ENCODE measurements at regions of chr18 and their contacts with region 1.

Region 1: DNA sequence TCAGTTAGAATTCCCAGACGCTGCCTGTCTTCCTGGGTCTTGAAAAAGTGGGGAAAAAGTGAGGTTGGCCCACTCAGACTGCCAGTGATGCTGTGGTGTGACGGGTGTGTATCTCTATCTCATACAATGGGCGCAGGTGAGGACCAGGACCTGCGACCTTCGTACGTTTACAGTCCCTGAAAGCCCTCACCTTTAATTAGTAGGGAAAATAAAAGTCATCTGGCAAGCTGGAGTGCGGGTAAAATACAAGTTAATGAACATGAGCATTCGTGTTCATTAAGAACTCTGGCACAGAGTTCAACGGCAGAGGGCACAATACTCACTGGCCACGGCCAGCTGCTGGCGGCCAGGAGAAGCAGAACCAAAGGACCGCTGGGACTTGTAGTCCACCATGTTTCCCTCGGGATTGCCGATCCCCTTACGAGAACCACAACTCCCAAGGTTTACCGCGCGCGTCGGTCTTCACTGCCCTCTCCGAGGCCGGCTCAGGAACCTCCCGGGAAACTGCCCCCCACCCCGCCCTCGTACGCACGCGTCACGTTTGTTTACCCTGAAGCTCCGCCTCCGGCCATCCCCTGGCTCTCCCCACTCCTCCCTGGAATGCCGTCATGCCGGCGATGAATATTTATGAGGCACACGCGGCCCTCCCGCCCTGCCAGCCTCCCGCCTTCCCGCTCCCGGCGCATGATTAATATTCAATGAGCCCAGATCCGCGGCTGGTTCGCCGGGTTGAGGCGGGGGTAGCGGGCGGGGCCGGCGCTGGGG is 488 bp upstream of the PHLPP1 start:
- DNase-seq: peak; percentile 98
- ATAC-seq: peak; percentile 81
- H3K4me3 ChIP-seq: peak overlapping the region; percentile 73
- H3K27ac ChIP-seq: peak overlapping the region; percentile 43
- H3K4me1 ChIP-seq: peaks cover 34% of the 10 kb centered on the region
- H3K27me3 ChIP-seq: no peaks in the 10 kb centered on the region
- CTCF ChIP-seq: peak; percentile 87

Region 2: DNA sequence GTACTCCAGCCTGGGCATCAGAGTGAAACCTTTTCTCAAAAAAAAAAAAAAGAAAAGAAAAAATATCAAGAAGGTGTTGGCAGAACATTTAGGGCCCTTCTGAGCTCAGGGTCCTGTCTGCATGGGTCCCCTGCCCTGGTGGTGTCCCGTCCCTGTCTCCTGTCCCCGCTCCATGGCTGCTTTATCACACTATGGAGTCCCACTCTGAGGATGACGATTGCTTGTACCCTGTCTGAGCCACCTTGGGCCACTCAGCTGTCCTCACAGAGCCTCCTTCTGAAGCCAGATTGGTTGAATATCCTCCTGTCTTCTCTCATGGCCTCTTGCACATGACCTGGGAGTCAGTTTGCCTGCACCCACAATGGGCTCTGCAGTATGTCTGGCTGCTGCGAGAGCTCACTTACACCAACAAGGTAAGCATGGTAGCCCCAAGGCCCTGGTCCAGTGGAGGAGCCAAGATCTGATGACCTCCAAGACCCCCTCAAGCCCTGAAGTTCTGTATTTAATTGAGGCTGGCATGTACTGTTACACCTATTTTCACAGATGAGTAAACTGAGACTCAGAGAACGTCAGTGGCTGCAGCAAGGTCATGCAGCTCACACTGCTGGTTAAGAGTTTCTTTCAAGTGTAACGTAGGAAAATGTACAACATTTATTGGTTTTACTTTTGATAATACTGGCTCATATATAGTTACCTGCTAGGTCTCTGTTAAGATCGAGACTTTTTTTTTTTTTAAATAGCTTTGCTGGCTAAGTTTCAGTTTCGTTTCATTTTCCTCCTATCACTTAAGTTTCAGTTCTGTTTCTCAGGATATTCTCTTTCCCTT is 209.0 kb before region 1 on chr18:
- CTCF ChIA-PET with region 1: no interaction called
- POLR2A ChIA-PET with region 1: no interaction called
- intact Hi-C with region 1: no loop called
- DNase-seq: peak; percentile 27
- ATAC-seq: peak; percentile 54
- H3K4me3 ChIP-seq: peak overlapping the region; percentile 82
- H3K27ac ChIP-seq: no peak overlapping the region
- H3K4me1 ChIP-seq: peaks cover 4% of the 10 kb centered on the region; the same call in 1 of the 2 replicates
- H3K27me3 ChIP-seq: no peaks in the 10 kb centered on the region
- CTCF ChIP-seq: no peak

Region 3: DNA sequence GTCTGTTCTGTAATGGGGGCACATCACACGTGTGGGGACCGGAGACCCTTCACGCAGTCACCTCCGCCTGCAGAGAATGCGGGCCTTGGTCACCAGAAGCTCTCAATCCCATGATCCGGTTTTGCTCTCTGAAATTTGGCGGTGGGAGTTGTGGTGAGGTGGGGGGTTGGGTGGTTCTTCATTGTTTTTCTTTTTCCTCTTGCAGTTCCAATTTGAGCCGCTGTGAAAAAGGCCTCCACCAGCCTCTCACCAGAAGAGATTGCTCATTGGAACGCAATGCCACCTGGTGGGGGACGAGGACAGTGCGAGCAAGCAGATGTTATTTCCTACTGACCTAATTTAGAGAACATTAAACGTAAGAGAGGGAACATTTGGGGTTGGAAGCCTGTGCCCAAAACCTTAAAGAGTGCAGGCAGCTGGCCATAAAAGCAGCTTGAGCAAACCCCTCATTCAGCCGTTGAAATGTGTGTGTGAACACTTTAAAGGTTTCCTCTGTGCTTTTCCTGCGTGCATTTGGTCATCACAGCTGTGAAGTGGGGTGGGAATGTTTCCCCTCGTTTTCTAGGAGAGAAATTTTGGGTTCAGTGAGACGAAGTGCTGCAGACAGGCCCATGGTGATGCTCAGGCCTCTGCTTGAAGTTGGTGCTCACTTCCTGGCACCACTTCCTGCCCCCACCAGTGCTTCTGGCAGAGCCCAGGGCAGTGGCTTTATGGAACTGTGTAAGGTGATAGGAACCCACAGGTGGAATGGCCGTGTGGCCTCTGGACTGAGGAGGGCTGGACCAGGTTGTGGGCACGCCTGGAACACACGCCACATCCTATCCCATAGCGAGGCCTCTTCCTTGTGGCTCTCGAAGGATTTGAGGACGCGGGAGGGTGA is 130.4 kb before region 1 on chr18:
- CTCF ChIA-PET with region 1: interaction called, 3 read pairs
- POLR2A ChIA-PET with region 1: no interaction called
- intact Hi-C with region 1: loop called (anchors 1 kb)
- DNase-seq: peak; percentile 90
- ATAC-seq: peak; percentile 83
- H3K4me3 ChIP-seq: no peak overlapping the region
- H3K27ac ChIP-seq: no peak overlapping the region
- H3K4me1 ChIP-seq: peaks cover 4% of the 10 kb centered on the region
- H3K27me3 ChIP-seq: no peaks in the 10 kb centered on the region
- CTCF ChIP-seq: peak; percentile 97

Region 4: GRCh38 chr18:62738639-62739038 is 23.8 kb after region 1 on chr18:
- CTCF ChIA-PET with region 1: no interaction called
- POLR2A ChIA-PET with region 1: no interaction called
- intact Hi-C with region 1: no loop called
- DNase-seq: no peak
- ATAC-seq: no peak
- H3K4me3 ChIP-seq: no peak overlapping the region
- H3K27ac ChIP-seq: no peak overlapping the region
- H3K4me1 ChIP-seq: peaks cover 6% of the 10 kb centered on the region; the same call in 1 of the 2 replicates
- H3K27me3 ChIP-seq: no peaks in the 10 kb centered on the region
- CTCF ChIP-seq: no peak

Region 5: GRCh38 chr18:62757399-62758010 is 42.7 kb after region 1 on chr18:
- CTCF ChIA-PET with region 1: interaction called, 8 read pairs
- POLR2A ChIA-PET with region 1: interaction called, 10 read pairs
- intact Hi-C with region 1: loop called (anchors 1 kb)
- DNase-seq: peak; percentile 93
- ATAC-seq: peak; percentile 65
- H3K4me3 ChIP-seq: peak overlapping the region; percentile 47
- H3K27ac ChIP-seq: peak overlapping the region; percentile 89
- H3K4me1 ChIP-seq: peaks cover 50% of the 10 kb centered on the region
- H3K27me3 ChIP-seq: no peaks in the 10 kb centered on the region
- CTCF ChIP-seq: no peak

Region 6: GRCh38 chr18:62925031-62925688 is 210.3 kb after region 1 on chr18:
- CTCF ChIA-PET with region 1: interaction called, 5 read pairs
- POLR2A ChIA-PET with region 1: no interaction called
- intact Hi-C with region 1: loop called (anchors 1 kb)
- DNase-seq: peak; percentile 88
- ATAC-seq: peak; percentile 95
- H3K4me3 ChIP-seq: peak overlapping the region; percentile 41; the same call in 1 of the 2 replicates
- H3K27ac ChIP-seq: peak overlapping the region; percentile 84
- H3K4me1 ChIP-seq: peaks cover 34% of the 10 kb centered on the region
- H3K27me3 ChIP-seq: no peaks in the 10 kb centered on the region
- CTCF ChIP-seq: no peak

Region 7: DNA sequence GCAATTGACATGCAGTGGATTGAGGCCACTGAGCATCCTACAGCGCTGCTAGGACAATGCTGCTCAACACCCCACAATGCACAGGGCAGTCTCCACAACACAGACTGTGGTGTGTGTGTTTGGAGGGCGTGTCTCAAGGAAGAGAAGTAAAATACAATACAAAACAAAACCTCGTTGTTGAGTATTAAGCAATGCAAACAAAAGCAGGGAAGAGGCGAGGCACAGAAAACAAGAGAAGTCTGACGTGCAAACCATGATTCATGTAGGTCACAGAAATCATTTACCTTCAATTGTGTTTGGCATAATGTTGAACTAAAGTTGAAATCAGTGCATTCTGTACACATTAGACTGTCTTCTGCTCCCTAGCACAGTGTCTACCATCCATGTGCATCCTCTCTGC is 261.4 kb after region 1 on chr18:
- CTCF ChIA-PET with region 1: no interaction called
- POLR2A ChIA-PET with region 1: no interaction called
- intact Hi-C with region 1: loop called (anchors 2 kb)
- DNase-seq: peak; percentile 84
- ATAC-seq: peak; percentile 89
- H3K4me3 ChIP-seq: no peak overlapping the region
- H3K27ac ChIP-seq: peak overlapping the region; percentile 89
- H3K4me1 ChIP-seq: peaks cover 31% of the 10 kb centered on the region
- H3K27me3 ChIP-seq: no peaks in the 10 kb centered on the region
- CTCF ChIP-seq: no peak